Activated CD4-positive, alpha-beta T cell treated with anti-CD3 and anti-CD28 coated beads for 36 hours (primary cell): ENCODE measurements at regions of chr16 and their contacts with region 1.

Region 1: GRCh38 chr16:50747207-50747956 is 5.5 kb downstream of the CYLD start:
- DNase-seq: no peak
- ATAC-seq: peak; percentile 74
- H3K4me3 Mint-ChIP-seq: peak overlapping the region; percentile 68
- H3K27ac Mint-ChIP-seq: peak overlapping the region; percentile 88
- H3K4me1 Mint-ChIP-seq: peaks cover 66% of the 10 kb centered on the region
- H3K27me3 Mint-ChIP-seq: no peaks in the 10 kb centered on the region

Region 2: GRCh38 chr16:50473356-50473945 is 273.9 kb before region 1 on chr16:
- CTCF ChIA-PET with region 1: no interaction called
- POLR2A ChIA-PET with region 1: no interaction called
- intact Hi-C with region 1: loop called in 1 of 2 experiments (anchors 5 kb)
- DNase-seq: peak; percentile 54
- ATAC-seq: peak; percentile 82
- H3K4me3 Mint-ChIP-seq: no peak overlapping the region
- H3K27ac Mint-ChIP-seq: peak overlapping the region; percentile 55
- H3K4me1 Mint-ChIP-seq: peaks cover 26% of the 10 kb centered on the region
- H3K27me3 Mint-ChIP-seq: peaks cover 3% of the 10 kb centered on the region

Region 3: GRCh38 chr16:50671644-50672260 is 75.6 kb before region 1 on chr16:
- CTCF ChIA-PET with region 1: interaction called, 298 read pairs
- POLR2A ChIA-PET with region 1: interaction called, 7 read pairs
- intact Hi-C with region 1: loop called (anchors 1 kb)
- DNase-seq: peak; percentile 80
- ATAC-seq: no peak
- H3K4me3 Mint-ChIP-seq: no peak overlapping the region
- H3K27ac Mint-ChIP-seq: peak overlapping the region; percentile 71
- H3K4me1 Mint-ChIP-seq: peaks cover 30% of the 10 kb centered on the region
- H3K27me3 Mint-ChIP-seq: no peaks in the 10 kb centered on the region

Region 4: DNA sequence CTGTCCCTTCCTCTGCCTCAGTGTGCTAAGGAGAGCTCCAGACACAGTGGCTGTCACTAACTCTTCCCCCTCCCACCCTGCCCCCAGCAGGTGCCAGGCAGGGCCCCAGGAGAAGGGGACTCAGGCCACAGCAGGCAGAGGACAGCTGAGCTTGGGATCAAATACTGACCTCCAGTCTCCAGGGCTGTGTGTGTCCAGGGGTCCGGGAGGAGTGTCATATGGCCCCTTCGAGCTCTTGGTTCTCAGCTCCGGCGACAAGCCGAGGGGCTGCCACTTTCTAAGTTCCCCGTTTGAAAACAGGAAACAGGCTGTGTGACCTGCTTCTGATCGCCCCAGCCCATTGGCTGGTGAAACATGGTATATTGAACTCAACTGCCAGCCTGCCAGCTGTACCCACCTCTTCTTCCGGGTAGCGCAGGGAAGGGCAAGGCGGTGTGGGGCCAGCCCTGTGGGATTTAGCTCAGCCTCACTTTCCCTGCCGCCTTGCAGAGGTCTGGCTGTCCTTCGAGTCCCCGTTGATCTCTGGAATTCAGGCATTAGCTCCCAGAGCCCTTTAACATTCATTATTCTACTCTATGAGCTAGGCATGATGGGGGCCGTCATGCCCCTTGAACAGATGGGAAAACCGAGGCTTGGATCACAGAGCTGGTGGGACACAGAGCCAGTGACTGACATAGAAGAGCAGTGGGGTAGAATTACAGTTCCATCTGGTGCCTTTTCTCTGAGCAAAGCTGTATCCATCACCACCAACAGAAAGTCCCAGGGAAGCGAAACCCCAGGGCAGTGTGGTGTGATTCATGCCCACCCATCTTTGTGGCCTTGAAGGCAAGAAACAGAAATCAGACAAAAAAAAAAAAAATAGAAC is 66.1 kb before region 1 on chr16 and contains the start of gene SNX20:
- CTCF ChIA-PET with region 1: interaction called, 298 read pairs
- POLR2A ChIA-PET with region 1: interaction called, 5 read pairs
- intact Hi-C with region 1: loop called (anchors 1 to 2 kb)
- DNase-seq: peak; percentile 80
- ATAC-seq: peak; percentile 69
- H3K4me3 Mint-ChIP-seq: peak within 1 kb of the TSS; percentile 78
- H3K27ac Mint-ChIP-seq: peak within 1 kb of the TSS; percentile 94
- H3K4me1 Mint-ChIP-seq: peaks cover 85% of the 10 kb centered on the region
- H3K27me3 Mint-ChIP-seq: no peaks in the 10 kb centered on the region
- total RNA-seq, gene SNX20: 43.3 to 48.9 TPM

Region 5: GRCh38 chr16:50765260-50765659 is 17.9 kb after region 1 on chr16:
- CTCF ChIA-PET with region 1: interaction called, 10 read pairs
- POLR2A ChIA-PET with region 1: interaction called, 5 read pairs
- intact Hi-C with region 1: loop called in 1 of 2 experiments (anchors 1 kb)
- DNase-seq: no peak
- ATAC-seq: peak; percentile 84
- H3K4me3 Mint-ChIP-seq: peak overlapping the region; percentile 34
- H3K27ac Mint-ChIP-seq: peak overlapping the region; percentile 92
- H3K4me1 Mint-ChIP-seq: peaks cover 95% of the 10 kb centered on the region
- H3K27me3 Mint-ChIP-seq: no peaks in the 10 kb centered on the region

Region 6: DNA sequence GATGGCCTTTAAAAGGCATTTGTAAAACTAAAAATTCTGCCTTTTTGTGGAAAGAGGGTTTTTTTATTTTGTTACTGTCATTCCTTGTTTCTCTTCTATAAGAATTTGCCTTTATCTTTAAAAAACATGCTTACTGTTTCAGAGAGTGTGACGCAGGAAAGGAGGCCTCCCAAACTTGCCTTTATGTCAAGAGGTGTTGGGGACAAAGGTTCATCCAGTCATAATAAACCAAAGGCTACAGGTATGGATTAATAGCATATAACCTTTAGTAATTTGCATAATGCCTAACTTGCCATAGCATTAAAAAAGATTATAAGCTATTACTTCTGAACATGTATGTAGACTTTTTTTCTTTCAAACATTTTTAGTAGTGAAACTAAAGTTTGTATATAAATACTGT is 28.7 kb after region 1 on chr16:
- CTCF ChIA-PET with region 1: interaction called, 10 read pairs
- POLR2A ChIA-PET with region 1: no interaction called
- intact Hi-C with region 1: no loop called
- DNase-seq: no peak
- ATAC-seq: no peak
- H3K4me3 Mint-ChIP-seq: no peak overlapping the region
- H3K27ac Mint-ChIP-seq: no peak overlapping the region
- H3K4me1 Mint-ChIP-seq: peaks cover 66% of the 10 kb centered on the region
- H3K27me3 Mint-ChIP-seq: no peaks in the 10 kb centered on the region